PC-9 (cell line): ENCODE measurements at regions of chr1 and their contacts with region 1.

Region 1: DNA sequence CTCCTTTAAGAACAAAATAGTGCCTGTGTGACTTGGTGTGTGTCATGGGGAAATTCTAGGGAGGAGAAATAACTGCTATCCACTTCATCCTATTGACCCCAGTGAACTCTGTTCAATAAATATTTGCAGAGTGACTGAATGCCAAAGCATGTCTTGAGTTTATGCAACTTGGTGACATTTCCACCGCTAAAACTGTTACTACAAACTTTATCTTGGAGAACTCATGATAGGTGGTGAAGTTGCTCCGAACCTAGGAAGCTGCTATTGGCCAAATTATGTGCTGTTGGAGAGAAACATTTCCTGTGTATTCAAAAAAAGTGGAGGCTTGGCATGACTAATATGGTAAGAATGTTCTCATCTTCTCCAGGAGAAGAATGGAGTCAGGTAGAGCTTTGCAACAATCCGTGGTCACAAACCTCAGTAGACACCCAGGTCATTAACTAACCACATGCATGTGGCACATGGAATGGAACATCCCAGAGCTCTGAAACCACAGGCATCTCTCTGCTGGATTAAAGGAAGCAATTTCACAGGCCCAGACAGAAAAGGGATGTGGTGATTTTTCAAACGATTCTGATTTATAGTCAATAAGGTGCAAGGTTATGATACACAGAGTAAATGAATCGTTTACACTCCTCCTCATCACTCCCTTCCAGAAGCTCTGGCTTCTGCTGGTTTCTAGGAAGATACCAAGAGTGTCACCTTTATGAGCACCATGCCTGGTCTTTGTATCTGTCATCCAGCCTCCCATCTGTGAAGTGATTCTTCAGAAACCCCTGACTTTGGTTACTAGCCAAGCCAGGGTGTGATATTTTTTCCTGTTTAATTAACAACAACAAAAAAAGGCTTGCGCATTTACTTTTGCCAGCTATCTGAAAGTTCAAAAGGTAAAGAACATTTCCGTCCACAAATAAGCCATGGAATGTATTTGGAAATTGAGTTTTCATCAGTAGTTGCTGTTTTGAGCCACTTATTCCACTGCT is 361.1 kb downstream of the TGFB2 start:
- DNase-seq: peak; percentile 85 to 99
- H3K4me3 ChIP-seq: peak overlapping the region; percentile 13; the same call in 1 of the 2 replicates
- H3K27ac ChIP-seq: peak overlapping the region; percentile 95
- H3K4me1 ChIP-seq: peaks cover 45% of the 10 kb centered on the region
- H3K27me3 ChIP-seq: no peaks in the 10 kb centered on the region
- CTCF ChIP-seq: no peak

Region 2: GRCh38 chr1:218345673-218346390 is 360.4 kb before region 1 on chr1:
- CTCF ChIA-PET with region 1: no interaction called
- POLR2A ChIA-PET with region 1: interaction called, 10 read pairs
- intact Hi-C with region 1: loop called (anchors 1 kb)
- DNase-seq: peak; percentile 51 to 64
- H3K4me3 ChIP-seq: peak overlapping the region; percentile 98
- H3K27ac ChIP-seq: peak overlapping the region; percentile 85
- H3K4me1 ChIP-seq: peaks cover 40% of the 10 kb centered on the region
- H3K27me3 ChIP-seq: no peaks in the 10 kb centered on the region
- CTCF ChIP-seq: no peak

Region 3: DNA sequence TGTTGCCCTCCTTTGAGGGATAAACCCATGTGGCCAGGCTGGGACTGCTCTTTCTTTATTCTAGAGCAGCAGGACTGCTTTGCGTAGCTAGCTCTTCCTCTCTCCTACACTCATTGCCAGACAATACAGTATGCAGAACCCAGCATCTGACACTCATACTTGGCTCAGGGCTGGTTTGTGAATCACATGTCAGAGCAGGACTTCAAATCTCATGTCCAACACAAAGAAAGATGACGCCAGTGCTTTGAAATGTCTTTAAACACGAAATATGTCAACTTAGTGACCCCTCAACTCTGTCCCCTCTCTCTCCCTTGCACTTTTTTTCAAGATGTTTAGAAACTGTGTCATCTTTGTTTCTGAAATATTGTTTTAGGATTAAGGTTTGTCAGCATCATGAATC is 226.1 kb before region 1 on chr1:
- CTCF ChIA-PET with region 1: no interaction called
- POLR2A ChIA-PET with region 1: no interaction called
- intact Hi-C with region 1: loop called (anchors 1 kb)
- DNase-seq: no peak
- H3K4me3 ChIP-seq: no peak overlapping the region
- H3K27ac ChIP-seq: peak overlapping the region; percentile 77
- H3K4me1 ChIP-seq: peaks cover 41% of the 10 kb centered on the region
- H3K27me3 ChIP-seq: no peaks in the 10 kb centered on the region
- CTCF ChIP-seq: no peak

Region 4: GRCh38 chr1:218585511-218586184 is 120.6 kb before region 1 on chr1:
- CTCF ChIA-PET with region 1: no interaction called
- POLR2A ChIA-PET with region 1: interaction called, 3 read pairs
- intact Hi-C with region 1: loop called (anchors 1 kb)
- DNase-seq: peak; percentile 63 to 91
- H3K4me3 ChIP-seq: no peak overlapping the region
- H3K27ac ChIP-seq: peak overlapping the region; percentile 67
- H3K4me1 ChIP-seq: peaks cover 22% of the 10 kb centered on the region
- H3K27me3 ChIP-seq: no peaks in the 10 kb centered on the region
- CTCF ChIP-seq: no peak

Region 5: DNA sequence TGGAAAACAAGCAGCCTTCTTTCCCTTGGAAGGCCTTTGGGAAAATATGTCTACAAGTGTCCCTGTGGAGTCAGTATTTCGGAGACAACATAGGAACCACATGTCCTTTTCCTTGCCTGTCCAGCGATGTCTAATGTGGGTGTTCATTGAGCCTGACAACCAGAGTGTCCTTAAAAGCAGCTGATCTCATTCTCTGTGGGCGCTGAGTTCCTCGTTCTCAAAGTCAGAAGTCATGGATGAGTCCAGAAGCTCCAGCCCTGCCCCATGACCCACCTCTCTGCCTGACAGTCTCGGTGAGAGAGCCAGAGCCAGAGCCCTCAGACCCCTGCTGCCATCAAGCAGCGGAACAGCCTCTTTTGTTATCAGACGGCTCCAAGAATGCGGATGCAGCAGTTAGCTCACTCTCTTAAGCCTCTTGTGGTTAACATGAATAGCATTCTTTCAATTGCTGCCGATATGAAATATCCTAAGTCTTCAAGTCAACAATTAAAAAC is 31.9 kb before region 1 on chr1:
- CTCF ChIA-PET with region 1: no interaction called
- POLR2A ChIA-PET with region 1: interaction called, 7 read pairs
- intact Hi-C with region 1: loop called (anchors 1 kb)
- DNase-seq: peak; percentile 90 to 92
- H3K4me3 ChIP-seq: no peak overlapping the region
- H3K27ac ChIP-seq: no peak overlapping the region
- H3K4me1 ChIP-seq: 0 out of 2 replicates have a peak, but pooled peaks cover 13% of the 10 kb centered on the region
- H3K27me3 ChIP-seq: no peaks in the 10 kb centered on the region
- CTCF ChIP-seq: no peak

Region 6: GRCh38 chr1:218694636-218695035 is 11.6 kb before region 1 on chr1:
- CTCF ChIA-PET with region 1: no interaction called
- POLR2A ChIA-PET with region 1: no interaction called
- intact Hi-C with region 1: no loop called
- DNase-seq: no peak
- H3K4me3 ChIP-seq: no peak overlapping the region
- H3K27ac ChIP-seq: no peak overlapping the region
- H3K4me1 ChIP-seq: no peaks in the 10 kb centered on the region
- H3K27me3 ChIP-seq: no peaks in the 10 kb centered on the region
- CTCF ChIP-seq: no peak

Region 7: GRCh38 chr1:219173758-219174588 is 467.8 kb after region 1 on chr1 and contains the start of gene LYPLAL1:
- CTCF ChIA-PET with region 1: no interaction called
- POLR2A ChIA-PET with region 1: no interaction called
- intact Hi-C with region 1: loop called (anchors 5 kb)
- DNase-seq: peak; percentile 70 to 92
- H3K4me3 ChIP-seq: peak within 1 kb of the TSS; percentile 74
- H3K27ac ChIP-seq: peak within 1 kb of the TSS; percentile 59
- H3K4me1 ChIP-seq: peaks cover 30% of the 10 kb centered on the region
- H3K27me3 ChIP-seq: no peaks in the 10 kb centered on the region
- CTCF ChIP-seq: no peak
- total RNA-seq, gene LYPLAL1: 39.3 and 57.0 TPM in 2 replicates

Region 8: DNA sequence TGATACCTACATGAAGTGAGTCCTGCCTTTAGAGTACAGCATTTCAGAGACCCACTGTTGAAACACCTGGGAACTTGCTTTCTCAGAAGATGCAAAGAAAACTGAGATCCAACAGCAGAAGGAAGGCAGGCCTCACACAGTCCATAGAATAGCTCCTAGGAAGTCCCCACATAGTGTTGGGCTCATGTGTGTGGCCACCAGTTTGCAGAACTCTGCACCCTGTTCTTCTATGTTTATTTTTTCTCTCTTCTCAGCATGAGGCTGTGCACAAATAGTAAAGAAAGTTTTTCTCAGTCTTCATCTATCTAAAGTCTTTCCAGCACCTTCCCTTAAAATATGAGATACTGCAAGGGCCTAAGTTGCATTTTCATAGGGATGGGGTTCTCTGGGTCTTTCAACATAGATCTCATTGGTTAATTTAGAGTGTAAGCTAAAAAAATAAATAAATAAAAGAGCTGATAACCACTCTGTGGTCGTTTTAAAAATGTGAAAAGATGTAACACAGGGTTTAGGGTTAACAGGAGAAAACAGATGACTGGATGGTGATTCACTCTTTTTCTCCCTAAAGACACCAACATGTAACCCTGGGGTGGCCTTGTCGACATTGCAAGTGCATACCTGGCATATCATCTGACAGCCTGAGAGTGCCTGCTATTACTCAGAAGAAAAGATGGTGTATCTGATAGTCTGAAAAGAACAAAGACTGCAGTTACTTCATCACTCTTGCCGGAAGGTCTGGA is 812.1 kb after region 1 on chr1:
- CTCF ChIA-PET with region 1: no interaction called
- POLR2A ChIA-PET with region 1: no interaction called
- intact Hi-C with region 1: loop called (anchors 1 kb)
- DNase-seq: peak; percentile 64 to 75
- H3K4me3 ChIP-seq: no peak overlapping the region
- H3K27ac ChIP-seq: peak overlapping the region; percentile 42; the same call in 1 of the 2 replicates
- H3K4me1 ChIP-seq: peaks cover 30% of the 10 kb centered on the region
- H3K27me3 ChIP-seq: no peaks in the 10 kb centered on the region
- CTCF ChIP-seq: no peak